ENCODE measurements at regions of chr15 and their contacts with region 1.

Region 1: DNA sequence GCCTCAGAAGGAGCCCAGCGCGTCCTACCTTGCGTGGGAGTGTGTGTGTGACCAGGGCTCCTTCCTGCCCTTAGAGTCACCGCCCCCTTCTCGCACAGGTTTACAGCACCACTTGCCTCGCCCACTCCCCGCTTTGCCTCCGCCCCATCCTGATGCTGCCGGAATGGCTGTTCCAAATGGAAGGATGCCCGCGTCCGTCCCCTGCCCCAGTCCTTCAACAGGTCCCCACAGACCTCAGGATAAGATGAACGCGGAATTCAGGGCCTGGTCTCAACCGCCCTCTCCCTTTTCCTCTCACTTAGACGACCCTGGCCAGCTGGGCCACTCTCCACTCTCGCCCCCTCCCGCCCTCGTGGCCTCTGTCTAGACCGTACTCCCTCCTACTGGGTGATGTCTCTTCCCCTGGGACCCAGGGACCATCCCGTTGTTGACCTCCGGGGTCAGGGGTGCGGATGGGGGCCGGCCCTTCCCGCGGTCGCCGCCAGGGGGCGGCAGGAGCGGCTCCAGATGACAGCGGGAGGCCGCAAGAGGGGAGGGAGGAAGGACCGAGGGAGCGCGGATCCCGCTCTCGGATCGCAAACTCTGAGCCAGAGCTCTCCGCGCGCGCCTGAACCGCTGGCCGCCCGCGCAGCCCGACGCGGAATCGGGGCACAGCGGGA is at the start of gene THSD4:
- DNase-seq: no peak
- H3K4me3 ChIP-seq: peak within 1 kb of the TSS; percentile 51 to 76
- H3K27ac ChIP-seq: peak within 1 kb of the TSS; percentile 79
- H3K4me1 ChIP-seq: peaks cover 26% of the 10 kb centered on the region
- H3K27me3 ChIP-seq: no peaks in the 10 kb centered on the region
- CTCF ChIP-seq: peak; percentile 75 to 95 (median 89)
- POLR2A ChIP-seq: no peak
- total RNA-seq, gene THSD4: 66.8 TPM

Region 2: DNA sequence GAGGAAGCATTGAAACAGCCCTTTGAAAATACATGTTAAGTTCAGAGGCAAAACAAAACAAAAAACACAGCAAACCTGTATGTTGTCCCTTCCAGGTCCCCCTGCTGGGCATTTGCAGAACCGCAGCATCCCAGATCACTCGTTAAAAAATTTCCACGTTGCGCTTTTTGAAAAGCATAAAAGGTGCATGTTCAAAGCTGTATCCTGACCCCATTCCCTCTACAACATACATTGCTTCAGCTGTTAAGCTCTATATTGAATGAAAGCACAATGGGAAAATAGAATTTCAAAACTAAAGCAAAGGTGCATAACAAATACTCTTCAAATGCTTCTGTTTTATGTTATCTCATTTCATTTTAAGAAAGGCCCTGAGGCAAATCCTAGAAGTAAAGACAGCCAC is 328.5 kb after region 1 on chr15:
- intact Hi-C with region 1: loop called (anchors 5 kb)
- DNase-seq: no peak
- H3K4me3 ChIP-seq: no peak overlapping the region
- H3K27ac ChIP-seq: no peak overlapping the region
- H3K4me1 ChIP-seq: peaks cover 19% of the 10 kb centered on the region
- H3K27me3 ChIP-seq: no peaks in the 10 kb centered on the region
- CTCF ChIP-seq: peak; percentile 65 to 90 (median 70)
- POLR2A ChIP-seq: no peak

Measured in vagina (tissue), 2 donors.